Panc1 (cell line): ENCODE measurements at regions of chr1 and their contacts with region 1.

Region 1: DNA sequence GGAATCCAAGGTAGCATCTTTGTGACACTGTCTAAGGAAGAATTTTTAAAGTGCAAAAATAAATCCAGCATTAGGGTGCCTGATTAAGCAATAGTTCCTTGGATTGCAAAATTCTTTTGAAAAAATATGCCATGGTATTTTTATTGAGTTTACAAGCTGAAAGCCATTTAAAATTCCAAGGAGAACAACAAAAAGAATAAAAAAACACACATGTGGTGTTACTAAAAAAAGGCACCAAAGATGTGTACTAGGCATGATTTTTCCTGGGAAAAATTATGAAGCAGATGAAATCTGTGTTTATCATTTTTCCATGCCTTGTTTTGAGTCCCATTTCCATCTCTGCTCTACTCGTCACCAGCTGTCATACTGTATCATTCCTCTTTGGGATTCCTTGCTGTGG is 157.0 kb upstream of the ZNHIT6 start:
- DNase-seq: no peak
- ATAC-seq: no peak
- H3K4me3 ChIP-seq: no peak overlapping the region
- H3K27ac ChIP-seq: no peak overlapping the region
- H3K4me1 ChIP-seq: no peaks in the 10 kb centered on the region
- H3K27me3 ChIP-seq: peaks cover 3% of the 10 kb centered on the region; the same call in 1 of the 2 replicates
- CTCF ChIP-seq: no peak

Region 2: GRCh38 chr1:85894651-85895050 is 29.4 kb after region 1 on chr1:
- CTCF ChIA-PET with region 1: no interaction called
- POLR2A ChIA-PET with region 1: no interaction called
- in situ Hi-C with region 1: no loop called
- intact Hi-C with region 1: no loop called
- DNase-seq: peak; percentile 33
- ATAC-seq: peak; percentile 79; the same call in 1 of the 2 replicates
- H3K4me3 ChIP-seq: no peak overlapping the region
- H3K27ac ChIP-seq: no peak overlapping the region
- H3K4me1 ChIP-seq: no peaks in the 10 kb centered on the region
- H3K27me3 ChIP-seq: no peaks in the 10 kb centered on the region
- CTCF ChIP-seq: peak; percentile 75; the same call in 1 of the 2 replicates

Region 3: DNA sequence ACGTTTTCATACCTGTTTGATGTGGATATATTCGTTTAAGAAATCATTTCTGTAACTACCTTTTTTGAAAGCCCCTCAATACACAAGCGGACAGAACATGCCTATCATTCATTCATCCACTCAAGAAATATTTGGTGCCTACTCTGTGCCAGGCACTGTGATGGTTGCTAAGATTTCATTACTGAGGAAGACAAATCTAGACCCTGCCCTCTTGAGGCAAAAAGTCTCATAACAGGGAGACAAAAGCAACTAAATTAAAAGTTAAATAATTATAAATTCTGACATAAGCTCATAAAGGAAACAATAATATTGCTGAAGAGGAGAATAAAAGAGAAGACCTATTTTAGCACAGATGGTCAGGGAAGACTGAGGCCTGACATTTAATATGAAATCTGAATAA is 46.5 kb after region 1 on chr1:
- CTCF ChIA-PET with region 1: no interaction called
- POLR2A ChIA-PET with region 1: no interaction called
- in situ Hi-C with region 1: no loop called
- intact Hi-C with region 1: no loop called
- DNase-seq: peak; percentile 22
- ATAC-seq: peak; percentile 83
- H3K4me3 ChIP-seq: no peak overlapping the region
- H3K27ac ChIP-seq: no peak overlapping the region
- H3K4me1 ChIP-seq: no peaks in the 10 kb centered on the region
- H3K27me3 ChIP-seq: 0 out of 2 replicates have a peak, but pooled peaks cover under 1% of the 10 kb centered on the region
- CTCF ChIP-seq: peak; percentile 77

Region 4: GRCh38 chr1:86226204-86226603 is 361.0 kb after region 1 on chr1:
- CTCF ChIA-PET with region 1: no interaction called
- POLR2A ChIA-PET with region 1: interaction called, 13 read pairs
- in situ Hi-C with region 1: no loop called
- intact Hi-C with region 1: no loop called
- DNase-seq: no peak
- ATAC-seq: no peak
- H3K4me3 ChIP-seq: no peak overlapping the region
- H3K27ac ChIP-seq: no peak overlapping the region
- H3K4me1 ChIP-seq: no peaks in the 10 kb centered on the region
- H3K27me3 ChIP-seq: peaks cover 40% of the 10 kb centered on the region
- CTCF ChIP-seq: no peak